ENCODE measurements at regions of chr2 and their contacts with region 1.

Region 1: DNA sequence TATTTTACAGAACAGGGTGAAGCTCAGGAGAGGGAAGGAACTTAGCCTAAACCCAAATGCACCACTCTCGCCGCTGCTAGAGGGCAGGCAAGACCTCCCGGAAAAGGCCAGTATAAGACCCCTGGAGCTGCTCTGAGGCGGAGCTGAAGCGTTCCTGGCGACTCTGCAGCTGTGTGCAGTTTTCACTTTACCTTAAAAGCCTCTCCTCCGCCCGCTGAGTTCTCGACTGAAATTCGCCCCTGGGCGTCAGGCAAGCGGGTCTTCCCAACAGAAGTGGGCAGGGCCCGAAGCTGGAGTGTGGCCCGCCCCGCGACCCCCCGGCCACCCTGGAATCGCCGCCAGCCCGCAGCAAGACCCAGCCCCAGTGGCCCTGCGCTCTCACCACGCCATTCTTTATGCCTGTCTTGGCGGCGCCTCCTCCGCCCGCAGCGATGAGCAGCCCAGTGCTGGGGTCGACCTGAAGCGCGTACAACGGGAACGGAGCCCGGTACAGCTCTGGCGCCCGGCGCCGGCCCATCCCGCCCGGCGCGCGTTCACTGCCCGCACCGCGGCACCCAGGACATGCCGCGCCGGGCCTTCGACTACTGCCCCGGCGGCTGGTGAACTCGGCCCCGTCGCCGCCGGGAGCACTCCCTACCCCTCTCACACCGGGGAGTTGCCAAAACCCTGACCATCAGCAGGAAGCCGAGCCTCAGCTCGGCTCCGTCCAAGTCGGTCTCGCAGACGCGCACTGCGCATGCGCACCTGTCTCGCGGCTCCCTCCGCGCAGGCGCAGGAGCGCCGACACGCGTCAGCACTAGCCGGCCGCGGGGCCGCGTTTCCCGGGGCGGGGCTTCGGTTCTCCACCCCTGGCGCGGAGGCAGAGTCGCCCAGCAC is at the start of gene PREB:
- DNase-seq: peak; percentile 99
- ATAC-seq: peak; percentile 99
- H3K4me3 Mint-ChIP-seq: peak within 1 kb of the TSS; percentile 95
- H3K27ac Mint-ChIP-seq: peak within 1 kb of the TSS; percentile 90
- H3K4me1 Mint-ChIP-seq: peaks cover 20% of the 10 kb centered on the region
- H3K27me3 Mint-ChIP-seq: no peaks in the 10 kb centered on the region
- CTCF ChIP-seq: no peak
- total RNA-seq, gene PREB: 38.6 and 38.7 TPM in 2 replicates

Region 2: GRCh38 chr2:27032495-27033252 is 101.5 kb before region 1 on chr2 and contains the start of gene TMEM214:
- CTCF ChIA-PET with region 1: no interaction called
- POLR2A ChIA-PET with region 1: no interaction called
- intact Hi-C with region 1: loop called (anchors 1 kb)
- DNase-seq: peak; percentile 76
- ATAC-seq: peak; percentile 95
- H3K4me3 Mint-ChIP-seq: peak within 1 kb of the TSS; percentile 93
- H3K27ac Mint-ChIP-seq: peak within 1 kb of the TSS; percentile 80
- H3K4me1 Mint-ChIP-seq: peaks cover 32% of the 10 kb centered on the region
- H3K27me3 Mint-ChIP-seq: no peaks in the 10 kb centered on the region
- CTCF ChIP-seq: no peak
- total RNA-seq, gene TMEM214: 84.4 and 92.1 TPM in 2 replicates

Region 3: DNA sequence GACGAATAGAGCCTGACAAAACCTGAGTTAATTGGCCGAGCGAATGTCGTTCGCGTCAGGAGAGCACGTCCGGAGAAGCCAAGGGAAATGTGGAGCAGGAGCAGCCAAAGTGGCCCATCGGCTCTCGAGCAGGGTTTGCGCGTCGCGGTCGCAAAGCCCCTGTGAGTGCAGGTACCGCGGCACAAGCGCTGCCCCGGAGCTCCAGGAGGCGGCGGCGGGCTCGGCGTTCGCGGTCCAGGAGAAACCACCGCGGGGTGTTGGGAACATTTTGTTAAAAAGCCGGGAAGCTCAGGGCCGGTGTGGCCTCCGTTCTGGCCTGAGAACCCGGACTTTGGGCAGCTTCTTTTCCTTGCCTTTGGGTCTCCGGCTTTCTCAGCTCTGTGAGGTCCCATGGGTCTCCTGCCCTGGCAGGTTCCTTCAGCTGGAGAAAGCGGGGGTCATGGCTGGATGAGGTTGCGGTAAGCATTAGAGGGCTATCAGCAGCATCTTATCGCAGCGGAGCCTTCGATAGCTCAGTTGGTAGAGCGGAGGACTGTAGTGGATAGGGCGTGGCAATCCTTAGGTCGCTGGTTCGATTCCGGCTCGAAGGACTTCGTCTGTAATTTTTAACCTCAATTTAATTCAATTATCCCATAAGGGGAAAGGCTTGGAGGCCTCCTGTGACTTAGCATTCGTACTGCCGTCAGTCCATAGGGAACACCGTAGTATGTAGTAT is 83.7 kb before region 1 on chr2:
- CTCF ChIA-PET with region 1: no interaction called
- POLR2A ChIA-PET with region 1: interaction called, 3 read pairs
- intact Hi-C with region 1: loop called (anchors 1 kb)
- DNase-seq: peak; percentile 91
- ATAC-seq: peak; percentile 60
- H3K4me3 Mint-ChIP-seq: peak overlapping the region; percentile 97
- H3K27ac Mint-ChIP-seq: peak overlapping the region; percentile 100
- H3K4me1 Mint-ChIP-seq: peaks cover 19% of the 10 kb centered on the region
- H3K27me3 Mint-ChIP-seq: peaks cover 6% of the 10 kb centered on the region
- CTCF ChIP-seq: no peak

Region 4: DNA sequence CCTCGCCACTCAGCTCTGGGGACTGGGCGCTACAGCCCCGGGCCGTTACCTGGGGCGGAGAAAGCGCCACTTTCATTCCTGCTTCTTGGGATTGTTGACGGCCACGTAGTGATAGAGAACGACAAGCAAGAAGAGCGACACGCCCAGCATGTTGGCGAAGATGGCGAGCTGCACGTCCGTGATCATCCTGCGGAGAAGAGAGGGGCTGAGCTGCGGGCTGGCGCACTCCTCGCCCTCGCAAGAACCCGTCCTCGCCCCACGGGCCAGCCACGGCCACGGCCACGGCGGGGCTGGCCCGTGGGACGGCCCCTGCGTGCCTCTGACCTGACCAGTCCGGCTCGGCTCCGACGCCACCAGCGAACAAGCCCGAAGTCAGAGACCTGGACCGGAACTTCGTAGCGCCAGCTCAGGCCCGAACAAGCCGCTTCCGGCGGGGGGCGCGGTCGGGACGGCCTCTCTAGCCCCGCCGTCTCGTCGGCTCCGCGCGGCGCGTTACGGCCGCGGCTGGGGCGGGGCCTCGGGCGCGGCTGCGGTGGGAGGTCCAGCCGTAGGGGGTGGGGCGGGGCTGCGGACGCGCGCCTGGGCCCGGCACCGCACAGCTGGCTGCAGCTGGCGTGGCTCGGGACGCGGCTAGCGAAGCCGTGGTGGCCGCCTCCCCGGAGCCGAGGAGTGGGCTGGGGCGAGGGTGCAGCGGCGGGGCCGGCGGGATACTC is 62.7 kb before region 1 on chr2 and contains the start of gene OST4:
- CTCF ChIA-PET with region 1: no interaction called
- POLR2A ChIA-PET with region 1: interaction called, 3 read pairs
- intact Hi-C with region 1: loop called (anchors 1 kb)
- DNase-seq: peak; percentile 92
- ATAC-seq: peak; percentile 96
- H3K4me3 Mint-ChIP-seq: peak within 1 kb of the TSS; percentile 97
- H3K27ac Mint-ChIP-seq: peak within 1 kb of the TSS; percentile 90
- H3K4me1 Mint-ChIP-seq: peaks cover 67% of the 10 kb centered on the region
- H3K27me3 Mint-ChIP-seq: no peaks in the 10 kb centered on the region
- CTCF ChIP-seq: no peak
- total RNA-seq, gene OST4: 243 and 265 TPM in 2 replicates

Region 5: DNA sequence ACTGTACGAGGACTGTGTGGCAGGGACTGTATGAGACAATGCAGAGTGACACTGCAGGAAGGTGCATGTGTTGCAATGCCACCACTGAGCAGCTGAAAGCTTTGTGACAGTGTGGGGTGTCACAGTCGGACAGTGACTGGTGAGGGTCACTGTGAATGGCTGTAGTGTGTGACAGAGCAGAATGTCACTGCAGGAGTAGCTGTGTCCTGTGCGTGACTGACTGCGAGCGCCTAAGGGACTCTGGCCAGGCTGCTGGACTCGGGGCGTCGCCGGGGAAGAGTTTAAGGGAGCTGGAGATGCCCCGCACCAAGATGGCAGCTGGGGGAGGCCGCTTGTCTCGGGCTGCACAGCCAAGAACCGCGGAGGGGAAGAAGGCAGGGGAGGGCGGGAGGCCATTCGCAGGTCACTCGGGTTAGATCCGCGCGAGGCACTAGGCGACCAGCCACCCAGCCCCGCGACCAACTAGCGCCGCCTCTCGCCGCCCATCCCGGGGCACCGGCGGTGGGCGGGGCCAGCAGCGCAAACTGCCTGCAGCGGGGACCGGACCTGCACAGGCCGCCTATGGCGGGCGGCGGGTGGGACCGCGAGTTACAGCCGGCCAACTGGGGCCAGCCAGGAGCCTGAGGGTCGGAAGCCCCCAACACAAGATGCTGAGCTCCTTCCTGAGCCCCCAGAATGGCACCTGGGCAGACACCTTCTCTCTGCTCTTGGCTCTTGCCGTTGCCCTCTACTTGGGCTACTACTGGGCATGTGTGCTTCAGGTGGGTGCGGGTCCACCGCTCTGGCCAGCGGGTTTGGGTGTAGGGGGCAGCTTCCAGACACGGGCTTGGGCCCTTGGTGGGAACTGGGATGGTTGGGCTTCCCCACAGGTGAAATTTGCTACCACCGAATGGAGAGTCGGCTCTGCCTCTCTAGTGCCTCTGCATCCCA is 10.6 kb before region 1 on chr2 and contains the start of gene ABHD1:
- CTCF ChIA-PET with region 1: interaction called, 10 read pairs
- POLR2A ChIA-PET with region 1: interaction called, 32 read pairs
- intact Hi-C with region 1: loop called (anchors 1 kb)
- DNase-seq: peak; percentile 69
- ATAC-seq: peak; percentile 89
- H3K4me3 Mint-ChIP-seq: peak within 1 kb of the TSS; percentile 89
- H3K27ac Mint-ChIP-seq: peak within 1 kb of the TSS; percentile 43
- H3K4me1 Mint-ChIP-seq: peaks cover 15% of the 10 kb centered on the region
- H3K27me3 Mint-ChIP-seq: peaks cover 22% of the 10 kb centered on the region
- CTCF ChIP-seq: no peak
- total RNA-seq, gene ABHD1: 0.20 and 1.1 TPM in 2 replicates

Region 6: GRCh38 chr2:27191053-27191829 is 57.1 kb after region 1 on chr2:
- CTCF ChIA-PET with region 1: interaction called, 10 read pairs
- POLR2A ChIA-PET with region 1: no interaction called
- intact Hi-C with region 1: no loop called
- DNase-seq: no peak
- ATAC-seq: peak; percentile 77
- H3K4me3 Mint-ChIP-seq: no peak overlapping the region
- H3K27ac Mint-ChIP-seq: no peak overlapping the region
- H3K4me1 Mint-ChIP-seq: no peaks in the 10 kb centered on the region
- H3K27me3 Mint-ChIP-seq: peaks cover 4% of the 10 kb centered on the region
- CTCF ChIP-seq: no peak

Region 7: GRCh38 chr2:27217217-27218121 is 83.3 kb after region 1 on chr2 and contains the start of gene CAD:
- CTCF ChIA-PET with region 1: no interaction called
- POLR2A ChIA-PET with region 1: interaction called, 12 read pairs
- intact Hi-C with region 1: loop called (anchors 1 kb)
- DNase-seq: peak; percentile 86
- ATAC-seq: peak; percentile 85
- H3K4me3 Mint-ChIP-seq: peak within 1 kb of the TSS; percentile 93
- H3K27ac Mint-ChIP-seq: peak within 1 kb of the TSS; percentile 87
- H3K4me1 Mint-ChIP-seq: peaks cover 45% of the 10 kb centered on the region
- H3K27me3 Mint-ChIP-seq: no peaks in the 10 kb centered on the region
- CTCF ChIP-seq: no peak
- total RNA-seq, gene CAD: 55.9 and 64.1 TPM in 2 replicates

Measured in activated B cell treated with CpG ODN at 0.5 μM for 24 hours (primary cell).